Gastrocnemius medialis (tissue), 4 donors: ENCODE measurements at regions of chr6 and their contacts with region 1.

Region 1: GRCh38 chr6:98947351-98948292 is at the start of gene FBXL4:
- DNase-seq: peak; percentile 73 to 83
- ATAC-seq: peak; percentile 87 to 89
- H3K4me3 ChIP-seq: peak within 1 kb of the TSS; percentile 70 to 92 (median 76)
- H3K27ac ChIP-seq: peak within 1 kb of the TSS; percentile 80 to 93 (median 88)
- H3K4me1 ChIP-seq: peaks cover 18 to 24% of the 10 kb centered on the region in 2 donors
- H3K27me3 ChIP-seq: no peaks in the 10 kb centered on the region
- CTCF ChIP-seq: peak in 1 of 5 experiments; percentile 9
- POLR2A ChIP-seq: peak; percentile 67 to 80
- total RNA-seq, gene FBXL4: 16.4 to 35.0 (median 22.4) TPM

Region 2: GRCh38 chr6:97282726-97283617 is 1664.7 kb before region 1 on chr6 and contains the start of gene MMS22L:
- in situ Hi-C with region 1: no loop called
- intact Hi-C with region 1: loop called (anchors 5 kb)
- DNase-seq: peak; percentile 78 to 87
- ATAC-seq: peak; percentile 97 to 98
- H3K4me3 ChIP-seq: peak within 1 kb of the TSS; percentile 71 to 99 (median 86)
- H3K27ac ChIP-seq: peak within 1 kb of the TSS; percentile 35 to 71 (median 54)
- H3K4me1 ChIP-seq: peaks cover 3 to 11% of the 10 kb centered on the region in 2 donors
- H3K27me3 ChIP-seq: no peaks in the 10 kb centered on the region
- CTCF ChIP-seq: no peak
- POLR2A ChIP-seq: no peak
- total RNA-seq, gene MMS22L: 0.22 to 2.7 (median 2.3) TPM

Region 3: GRCh38 chr6:98977671-98978292 is 30.2 kb after region 1 on chr6:
- in situ Hi-C with region 1: no loop called
- intact Hi-C with region 1: loop called (anchors 2 kb)
- DNase-seq: no peak
- ATAC-seq: no peak
- H3K4me3 ChIP-seq: no peak overlapping the region
- H3K27ac ChIP-seq: no peak overlapping the region
- H3K4me1 ChIP-seq: peaks cover 30 to 36% of the 10 kb centered on the region in 2 donors
- H3K27me3 ChIP-seq: no peaks in the 10 kb centered on the region
- CTCF ChIP-seq: no peak
- POLR2A ChIP-seq: no peak

Region 4: DNA sequence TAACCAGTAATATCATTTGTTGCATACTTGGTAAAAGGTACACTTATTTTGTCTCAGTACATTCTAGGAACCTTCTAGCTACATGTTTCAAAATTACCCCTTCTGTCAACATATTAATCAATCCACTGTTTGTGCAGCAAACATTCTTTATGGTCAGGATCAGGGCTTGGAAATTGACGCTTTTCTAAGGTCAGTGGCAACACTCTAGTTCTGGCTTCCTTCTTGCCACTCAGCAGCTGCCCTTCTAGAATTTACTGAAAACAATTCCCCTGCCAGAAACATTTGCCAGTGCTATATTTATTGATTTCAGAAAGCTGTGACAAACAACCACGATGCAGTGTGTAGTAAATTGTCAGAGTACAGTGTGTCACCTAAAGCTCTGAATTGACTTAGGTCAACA is 84.8 kb after region 1 on chr6:
- in situ Hi-C with region 1: no loop called
- intact Hi-C with region 1: loop called (anchors 2 kb)
- DNase-seq: no peak
- ATAC-seq: peak in 1 of 2 donors; percentile 84
- H3K4me3 ChIP-seq: no peak overlapping the region
- H3K27ac ChIP-seq: peak overlapping the region; percentile 35 to 73 (median 65)
- H3K4me1 ChIP-seq: peaks cover 17 to 26% of the 10 kb centered on the region in 2 donors
- H3K27me3 ChIP-seq: no peaks in the 10 kb centered on the region
- CTCF ChIP-seq: no peak
- POLR2A ChIP-seq: no peak